ENCODE measurements at regions of chr6 and their contacts with region 1.

Region 1: GRCh38 chr6:40587240-40588069 is at the start of gene LRFN2:
- DNase-seq: peak; percentile 28 to 83 (median 64)
- ATAC-seq: peak; percentile 89
- H3K4me3 ChIP-seq: peak within 1 kb of the TSS; percentile 61
- H3K4me3 Mint-ChIP-seq: peak within 1 kb of the TSS; percentile 72 to 90 (median 84)
- H3K27ac ChIP-seq: peak within 1 kb of the TSS; percentile 32
- H3K27ac Mint-ChIP-seq: peak within 1 kb of the TSS in 3 of 9 donors; percentile 28 to 66 (median 50)
- H3K4me1 ChIP-seq: peaks cover 0 to 10% of the 10 kb centered on the region in 2 donors
- H3K4me1 Mint-ChIP-seq: peaks cover 0 to 36% (median 11%) of the 10 kb centered on the region in 7 donors
- H3K27me3 ChIP-seq: no peaks in the 10 kb centered on the region
- H3K27me3 Mint-ChIP-seq: peaks cover 17 to 54% (median 30%) of the 10 kb centered on the region in 5 donors
- total RNA-seq, gene LRFN2: 0.19 to 4.6 (median 0.96) TPM in 3 of 5 experiments, not detected in the others

Region 2: DNA sequence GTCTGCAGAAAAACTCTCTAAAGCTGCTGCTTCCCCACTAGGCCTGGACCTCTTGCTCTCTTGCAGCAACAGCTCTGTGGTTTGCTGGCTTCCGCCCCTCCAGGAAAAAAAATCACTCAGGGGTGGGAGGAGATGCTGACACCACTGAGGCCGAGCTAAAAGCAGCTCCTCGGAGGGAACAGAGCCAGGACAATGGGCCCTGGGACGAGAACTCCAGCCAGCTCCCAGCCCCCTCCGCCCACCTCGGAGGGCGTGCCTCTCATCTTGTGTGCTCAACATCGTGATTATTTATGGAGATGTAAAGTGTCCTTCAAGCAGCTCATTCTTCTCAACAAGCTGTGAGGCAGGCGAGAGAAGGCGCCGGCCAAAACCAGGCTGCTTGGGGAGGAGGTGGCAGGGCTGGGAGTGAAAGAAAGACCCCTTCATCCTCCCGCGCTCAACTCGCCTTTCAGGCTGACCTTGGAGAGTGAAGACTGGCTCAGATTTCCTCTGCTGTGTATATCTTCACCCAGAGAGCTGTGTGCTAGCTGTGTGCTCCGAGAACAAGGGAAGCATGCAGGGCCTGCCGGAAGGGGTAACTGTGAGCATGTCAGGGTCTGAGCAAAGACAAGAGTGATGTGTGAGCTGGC is 53.3 kb after region 1 on chr6:
- CTCF ChIA-PET with region 1: no interaction called
- POLR2A ChIA-PET with region 1: no interaction called
- intact Hi-C with region 1: loop called in 1 of 2 experiments (anchors 1 kb)
- DNase-seq: peak in 7 of 9 donors; percentile 25 to 54 (median 39)
- ATAC-seq: peak; percentile 59
- H3K4me3 ChIP-seq: peak overlapping the region; percentile 32
- H3K4me3 Mint-ChIP-seq: peak overlapping the region; percentile 5 to 85 (median 62)
- H3K27ac ChIP-seq: peak overlapping the region; percentile 53
- H3K27ac Mint-ChIP-seq: peak overlapping the region; percentile 48 to 96 (median 80)
- H3K4me1 ChIP-seq: peaks cover 4 to 19% of the 10 kb centered on the region in 2 donors
- H3K4me1 Mint-ChIP-seq: peaks cover 10 to 37% (median 23%) of the 10 kb centered on the region in 7 donors
- H3K27me3 ChIP-seq: no peaks in the 10 kb centered on the region
- H3K27me3 Mint-ChIP-seq: peaks cover 0 to 16% (median 2%) of the 10 kb centered on the region in 5 donors